ENCODE measurements at regions of chr1 and their contacts with region 1.

Region 1: DNA sequence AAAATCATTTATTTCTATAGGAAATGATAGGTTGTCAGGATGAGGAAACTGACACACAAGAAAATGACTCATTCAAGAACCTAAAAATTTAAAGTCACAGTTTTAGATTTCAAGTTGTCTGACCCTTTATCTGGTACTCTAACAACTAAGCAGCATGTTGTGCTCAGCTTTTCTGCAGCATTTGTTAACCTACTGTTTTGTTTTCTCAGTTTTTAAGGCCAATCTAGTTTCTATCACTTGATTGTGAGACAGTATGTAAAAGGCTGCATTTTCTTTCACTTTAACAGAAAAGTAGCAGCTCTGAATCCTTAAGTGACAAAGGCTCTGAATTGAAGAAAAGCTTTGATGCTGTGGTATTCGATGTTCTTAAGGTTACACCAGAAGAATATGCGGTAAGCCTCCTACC is 59.1 kb downstream of the RALGPS2 start:
- DNase-seq: peak; percentile 19
- H3K4me3 Mint-ChIP-seq: peak overlapping the region; percentile 1
- H3K27ac Mint-ChIP-seq: no peak overlapping the region
- H3K4me1 Mint-ChIP-seq: peaks cover 10% of the 10 kb centered on the region
- H3K27me3 Mint-ChIP-seq: no peaks in the 10 kb centered on the region
- CTCF ChIP-seq: no peak

Region 2: DNA sequence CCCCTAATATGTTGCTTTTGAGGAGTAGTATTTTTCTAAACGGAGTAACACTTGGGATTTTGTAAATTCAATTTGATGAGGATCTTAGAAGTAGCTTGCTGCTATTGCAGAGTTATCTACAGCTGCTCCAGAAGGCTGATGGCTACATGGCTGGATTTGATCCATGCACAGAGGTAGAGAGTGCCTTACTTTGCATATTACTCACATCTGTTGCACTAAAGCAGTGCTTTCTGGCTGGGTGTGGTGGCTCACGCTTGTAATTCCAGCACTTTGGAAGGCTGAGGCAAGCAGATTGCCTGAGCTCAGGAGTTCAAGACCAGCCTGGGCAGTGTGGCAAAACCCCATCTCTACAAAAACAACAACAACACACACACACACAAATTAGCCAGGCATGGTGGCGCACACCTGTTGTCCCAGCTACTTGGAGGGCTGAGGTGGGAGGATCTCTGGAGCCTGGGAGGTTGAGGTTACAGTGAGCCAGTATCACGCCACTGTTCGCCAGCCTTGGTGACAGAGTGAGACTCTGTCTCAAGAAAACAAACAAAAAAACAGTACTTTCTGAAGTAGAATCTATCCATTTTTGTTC is 34.5 kb before region 1 on chr1:
- CTCF ChIA-PET with region 1: interaction called, 12 read pairs
- POLR2A ChIA-PET with region 1: interaction called, 3 read pairs
- intact Hi-C with region 1: no loop called
- DNase-seq: no peak
- H3K4me3 Mint-ChIP-seq: no peak overlapping the region
- H3K27ac Mint-ChIP-seq: no peak overlapping the region
- H3K4me1 Mint-ChIP-seq: peaks cover 7% of the 10 kb centered on the region
- H3K27me3 Mint-ChIP-seq: no peaks in the 10 kb centered on the region
- CTCF ChIP-seq: no peak